ENCODE measurements at regions of chr5 and their contacts with region 1.

Region 1: DNA sequence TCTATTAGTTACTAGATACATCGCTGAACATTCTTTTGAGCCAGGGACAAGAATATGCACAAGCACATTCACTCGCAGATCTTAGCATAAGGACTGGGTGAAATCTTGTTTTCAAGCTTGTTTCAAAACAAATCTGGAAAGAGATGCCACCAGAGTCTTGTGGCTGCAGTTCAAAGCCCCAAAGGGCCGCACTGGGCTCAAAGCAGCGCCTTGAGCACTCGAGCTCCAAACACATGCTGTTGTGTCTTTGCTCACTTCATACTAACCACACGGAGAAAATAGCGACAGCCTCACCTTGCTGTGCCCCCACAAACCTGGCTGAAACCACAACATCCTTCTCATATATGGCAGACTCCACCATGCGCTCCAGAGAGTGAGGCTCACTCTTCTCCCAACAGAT is 34.2 kb upstream of the IL7R start:
- DNase-seq: peak; percentile 22 to 84 (median 63)
- ATAC-seq: peak; percentile 74
- H3K4me3 ChIP-seq: no peak overlapping the region
- H3K4me3 Mint-ChIP-seq: peak overlapping the region; percentile 58
- H3K27ac ChIP-seq: peak overlapping the region; percentile 12 to 34
- H3K27ac Mint-ChIP-seq: peak overlapping the region; percentile 94
- H3K4me1 ChIP-seq: peaks cover 93% of the 10 kb centered on the region
- H3K4me1 Mint-ChIP-seq: peaks cover 90% of the 10 kb centered on the region
- H3K27me3 ChIP-seq: no peaks in the 10 kb centered on the region
- H3K27me3 Mint-ChIP-seq: no peaks in the 10 kb centered on the region
- CTCF ChIP-seq: no peak

Region 2: DNA sequence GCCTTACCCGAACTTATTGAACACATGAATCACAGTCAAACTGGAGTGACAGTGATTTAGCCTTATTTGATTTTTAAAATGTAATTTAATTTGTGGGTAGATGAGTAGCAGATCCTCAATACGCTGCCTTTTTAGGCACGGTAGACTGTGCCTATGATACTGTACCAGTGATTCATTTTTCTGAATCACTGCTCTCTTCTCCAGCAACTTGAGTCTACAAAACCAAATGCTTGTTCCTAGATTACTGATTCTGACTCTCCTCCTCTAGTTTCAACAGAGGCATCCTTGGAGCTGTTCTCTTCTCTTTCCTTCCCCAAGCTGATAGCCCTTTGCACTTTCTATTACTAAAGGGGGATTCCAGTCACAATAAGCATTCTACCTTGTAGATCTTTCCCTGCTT is 60.1 kb before region 1 on chr5:
- CTCF ChIA-PET with region 1: no interaction called
- POLR2A ChIA-PET with region 1: no interaction called
- intact Hi-C with region 1: no loop called
- DNase-seq: no peak
- ATAC-seq: no peak
- H3K4me3 ChIP-seq: no peak overlapping the region
- H3K4me3 Mint-ChIP-seq: no peak overlapping the region
- H3K27ac ChIP-seq: no peak overlapping the region
- H3K27ac Mint-ChIP-seq: peak overlapping the region; percentile 13
- H3K4me1 ChIP-seq: peaks cover 18% of the 10 kb centered on the region
- H3K4me1 Mint-ChIP-seq: peaks cover 43% of the 10 kb centered on the region
- H3K27me3 ChIP-seq: no peaks in the 10 kb centered on the region
- H3K27me3 Mint-ChIP-seq: no peaks in the 10 kb centered on the region
- CTCF ChIP-seq: no peak

Region 3: DNA sequence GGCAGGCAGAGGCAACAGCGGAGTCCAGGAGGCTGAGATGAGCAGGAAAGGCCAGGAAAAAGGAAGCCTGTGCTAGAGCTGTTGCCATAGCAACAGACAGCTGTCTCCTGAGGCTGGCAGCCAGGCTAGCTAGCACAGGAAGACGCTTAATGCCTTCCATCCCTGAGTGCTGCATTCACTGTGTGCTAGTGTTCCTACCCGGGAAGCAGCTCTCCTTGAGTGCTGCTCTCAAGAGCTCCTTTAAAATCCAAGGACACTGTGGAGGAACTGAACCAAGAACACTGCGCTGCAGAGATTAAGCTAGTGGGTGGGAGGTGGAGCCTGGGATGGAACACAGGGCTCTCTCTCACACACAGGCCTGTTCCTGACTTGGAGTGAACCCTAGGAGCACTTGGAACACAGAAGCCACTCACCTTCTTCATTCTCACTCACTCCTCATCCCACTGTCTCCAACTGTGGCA is 19.3 kb before region 1 on chr5:
- CTCF ChIA-PET with region 1: interaction called, 7 read pairs
- POLR2A ChIA-PET with region 1: interaction called, 10 read pairs
- intact Hi-C with region 1: no loop called
- DNase-seq: peak in 2 of 9 experiments; percentile 47 to 69
- ATAC-seq: peak; percentile 48
- H3K4me3 ChIP-seq: no peak overlapping the region
- H3K4me3 Mint-ChIP-seq: peak overlapping the region; percentile 6
- H3K27ac ChIP-seq: no peak overlapping the region
- H3K27ac Mint-ChIP-seq: peak overlapping the region; percentile 75
- H3K4me1 ChIP-seq: peaks cover 37% of the 10 kb centered on the region
- H3K4me1 Mint-ChIP-seq: peaks cover 64% of the 10 kb centered on the region
- H3K27me3 ChIP-seq: no peaks in the 10 kb centered on the region
- H3K27me3 Mint-ChIP-seq: no peaks in the 10 kb centered on the region
- CTCF ChIP-seq: no peak

Region 4: DNA sequence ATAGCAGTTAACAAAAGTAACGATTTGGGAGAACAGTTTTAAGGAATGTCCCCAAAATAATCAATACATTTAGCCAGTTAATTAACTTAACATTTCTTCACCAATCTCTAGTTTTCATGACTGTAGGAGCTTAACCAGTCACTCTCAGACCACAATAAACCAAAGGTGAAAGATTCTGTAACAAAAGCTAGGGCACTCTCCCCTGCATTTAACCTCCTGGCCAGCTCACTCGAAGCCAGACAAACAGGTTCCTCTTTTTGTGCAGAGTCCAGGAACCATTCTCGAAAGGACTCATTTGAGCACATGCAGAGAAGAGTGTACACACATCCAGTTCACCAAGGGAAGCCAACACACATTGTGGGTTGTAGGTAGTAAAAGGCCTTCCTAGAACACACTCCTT is 40.6 kb after region 1 on chr5:
- CTCF ChIA-PET with region 1: interaction called, 94 read pairs
- POLR2A ChIA-PET with region 1: interaction called, 700 read pairs
- intact Hi-C with region 1: no loop called
- DNase-seq: peak in 1 of 9 experiments; percentile 22
- ATAC-seq: no peak
- H3K4me3 ChIP-seq: peak overlapping the region; percentile 66 to 80
- H3K4me3 Mint-ChIP-seq: peak overlapping the region; percentile 91
- H3K27ac ChIP-seq: peak overlapping the region; percentile 59 to 97
- H3K27ac Mint-ChIP-seq: peak overlapping the region; percentile 96
- H3K4me1 ChIP-seq: peaks cover 52% of the 10 kb centered on the region
- H3K4me1 Mint-ChIP-seq: peaks cover 76% of the 10 kb centered on the region
- H3K27me3 ChIP-seq: no peaks in the 10 kb centered on the region
- H3K27me3 Mint-ChIP-seq: no peaks in the 10 kb centered on the region
- CTCF ChIP-seq: no peak

Region 5: DNA sequence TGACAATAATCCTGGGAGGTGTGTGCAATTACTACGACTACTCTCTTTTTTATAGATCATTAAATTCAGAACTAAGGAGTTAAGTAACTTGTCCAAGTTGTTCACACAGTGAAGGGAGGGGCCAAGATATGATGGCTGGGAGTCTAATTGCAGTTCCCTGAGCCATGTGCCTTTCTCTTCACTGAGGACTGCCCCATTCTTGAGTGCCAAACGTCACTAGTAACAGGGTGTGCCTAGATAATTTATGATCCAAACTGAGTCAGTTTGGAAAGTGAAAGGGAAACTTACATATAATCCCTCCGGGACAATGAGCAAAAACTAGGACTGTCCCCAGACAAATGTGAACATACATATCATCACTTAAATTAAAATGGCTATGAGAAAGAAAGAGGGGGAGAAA is 54.4 kb after region 1 on chr5:
- CTCF ChIA-PET with region 1: interaction called, 5 read pairs
- POLR2A ChIA-PET with region 1: interaction called, 48 read pairs
- intact Hi-C with region 1: no loop called
- DNase-seq: peak in 1 of 9 experiments; percentile 33
- ATAC-seq: no peak
- H3K4me3 ChIP-seq: no peak overlapping the region
- H3K4me3 Mint-ChIP-seq: peak overlapping the region; percentile 46
- H3K27ac ChIP-seq: peak overlapping the region in 1 of 2 experiments; percentile 23
- H3K27ac Mint-ChIP-seq: peak overlapping the region; percentile 87
- H3K4me1 ChIP-seq: peaks cover 65% of the 10 kb centered on the region
- H3K4me1 Mint-ChIP-seq: peaks cover 87% of the 10 kb centered on the region
- H3K27me3 ChIP-seq: no peaks in the 10 kb centered on the region
- H3K27me3 Mint-ChIP-seq: no peaks in the 10 kb centered on the region
- CTCF ChIP-seq: no peak

Region 6: GRCh38 chr5:36158144-36158543 is 335.6 kb after region 1 on chr5:
- CTCF ChIA-PET with region 1: no interaction called
- POLR2A ChIA-PET with region 1: no interaction called
- intact Hi-C with region 1: no loop called
- DNase-seq: no peak
- ATAC-seq: no peak
- H3K4me3 ChIP-seq: no peak overlapping the region
- H3K4me3 Mint-ChIP-seq: no peak overlapping the region
- H3K27ac ChIP-seq: no peak overlapping the region
- H3K27ac Mint-ChIP-seq: no peak overlapping the region
- H3K4me1 ChIP-seq: peaks cover 10% of the 10 kb centered on the region
- H3K4me1 Mint-ChIP-seq: peaks cover 49% of the 10 kb centered on the region
- H3K27me3 ChIP-seq: no peaks in the 10 kb centered on the region
- H3K27me3 Mint-ChIP-seq: no peaks in the 10 kb centered on the region
- CTCF ChIP-seq: no peak

Measured in CD8-positive, alpha-beta T cell (primary cell).